ENCODE measurements at regions of chr13 and their contacts with region 1.

Region 1: DNA sequence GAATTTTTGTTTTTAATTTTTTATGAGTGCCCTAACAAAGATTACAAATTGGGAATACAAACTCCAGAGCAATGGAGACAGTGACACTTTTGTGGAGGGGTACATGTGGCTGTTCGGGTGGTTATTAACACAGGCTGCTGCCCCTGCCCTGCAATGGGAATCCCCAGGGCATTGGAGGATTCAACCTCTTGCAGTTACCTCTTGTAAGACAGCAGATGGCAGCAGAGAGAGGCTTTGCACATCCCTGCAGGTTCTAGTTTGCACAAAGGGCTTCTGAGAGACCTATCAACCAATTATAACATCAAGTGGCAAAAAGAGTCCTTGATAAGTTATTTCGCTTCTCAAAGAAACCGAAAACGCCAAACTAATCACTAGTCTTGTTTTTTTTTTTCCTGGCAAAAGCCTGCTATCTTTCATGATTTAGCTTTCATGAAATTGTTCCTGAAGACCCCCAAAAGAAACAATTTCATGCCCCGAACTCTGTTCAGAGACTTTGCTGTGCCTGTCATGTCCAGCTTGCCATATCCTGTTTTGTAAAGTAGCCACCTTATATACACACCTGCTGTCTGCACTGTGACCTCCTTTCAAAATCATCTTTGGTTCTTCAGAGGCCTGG is 10.4 kb downstream of the GJB2 start:
- DNase-seq: no peak
- H3K4me3 ChIP-seq: no peak overlapping the region
- H3K27ac ChIP-seq: no peak overlapping the region
- H3K4me1 ChIP-seq: no peaks in the 10 kb centered on the region
- H3K27me3 ChIP-seq: peaks cover 33% of the 10 kb centered on the region
- CTCF ChIP-seq: peak; percentile 65 to 79 (median 79)
- EP300 ChIP-seq: no peak
- POLR2A ChIP-seq: no peak

Region 2: DNA sequence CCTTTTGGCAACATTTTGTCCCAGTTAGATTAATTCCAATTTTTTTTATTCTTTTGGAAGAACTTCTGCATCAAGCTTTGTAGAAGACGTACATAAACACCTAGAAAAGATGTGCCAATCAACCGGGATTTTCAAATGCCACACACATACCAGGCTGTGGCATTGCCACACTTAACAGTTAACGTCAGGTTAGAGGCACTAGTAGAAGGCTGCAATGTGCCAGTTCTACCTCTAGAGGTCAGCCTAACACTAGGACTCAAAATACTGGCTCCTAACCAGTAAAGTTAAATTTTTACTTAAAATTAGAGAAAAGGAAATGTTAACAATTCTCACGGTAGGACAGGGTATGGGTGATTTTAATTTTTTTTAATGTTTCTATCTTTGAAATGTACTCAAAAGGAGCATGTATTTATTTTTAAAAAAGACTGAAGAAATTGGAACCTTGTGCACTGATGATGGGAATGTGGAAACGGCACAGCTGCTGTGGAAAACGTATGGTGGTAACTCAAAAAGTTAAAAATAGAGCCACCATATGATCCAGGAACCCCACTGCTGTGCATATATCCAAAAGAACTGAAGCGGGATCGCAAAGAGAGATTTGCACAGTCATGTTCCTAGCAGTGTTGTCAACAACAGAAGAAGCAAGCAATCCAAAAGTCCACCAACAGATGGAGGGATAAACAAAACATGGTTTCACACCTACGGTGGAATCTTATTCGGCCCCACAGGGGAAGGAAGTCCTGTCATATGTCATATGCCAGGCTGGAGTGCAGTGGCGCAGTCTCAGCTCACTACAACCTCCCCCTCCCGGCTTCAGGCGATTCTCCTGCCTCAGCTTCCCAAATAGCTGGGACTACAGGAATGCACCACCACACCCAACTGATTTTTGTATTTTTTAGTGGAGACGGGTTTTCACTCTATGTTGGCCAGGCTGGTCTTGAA is 313.0 kb after region 1 on chr13:
- in situ Hi-C with region 1: loop called in 2 of 4 experiments (anchors 25 kb)
- intact Hi-C with region 1: no loop called
- DNase-seq: peak; percentile 73
- H3K4me3 ChIP-seq: no peak overlapping the region
- H3K27ac ChIP-seq: peak overlapping the region in 2 of 4 donors; percentile 25 to 34
- H3K4me1 ChIP-seq: peaks cover 5 to 13% (median 8%) of the 10 kb centered on the region in 4 donors
- H3K27me3 ChIP-seq: no peaks in the 10 kb centered on the region
- CTCF ChIP-seq: peak; percentile 91 to 98 (median 94)
- EP300 ChIP-seq: no peak
- POLR2A ChIP-seq: peak; percentile 12

Region 3: GRCh38 chr13:20814224-20814910 is 632.0 kb after region 1 on chr13:
- in situ Hi-C with region 1: loop called in 1 of 4 experiments (anchors 25 kb)
- intact Hi-C with region 1: no loop called
- DNase-seq: peak; percentile 60
- H3K4me3 ChIP-seq: no peak overlapping the region
- H3K27ac ChIP-seq: peak overlapping the region in 3 of 4 donors; percentile 45 to 63 (median 55)
- H3K4me1 ChIP-seq: peaks cover 0 to 16% (median 9%) of the 10 kb centered on the region in 4 donors
- H3K27me3 ChIP-seq: no peaks in the 10 kb centered on the region
- CTCF ChIP-seq: no peak
- EP300 ChIP-seq: no peak
- POLR2A ChIP-seq: no peak

Region 4: DNA sequence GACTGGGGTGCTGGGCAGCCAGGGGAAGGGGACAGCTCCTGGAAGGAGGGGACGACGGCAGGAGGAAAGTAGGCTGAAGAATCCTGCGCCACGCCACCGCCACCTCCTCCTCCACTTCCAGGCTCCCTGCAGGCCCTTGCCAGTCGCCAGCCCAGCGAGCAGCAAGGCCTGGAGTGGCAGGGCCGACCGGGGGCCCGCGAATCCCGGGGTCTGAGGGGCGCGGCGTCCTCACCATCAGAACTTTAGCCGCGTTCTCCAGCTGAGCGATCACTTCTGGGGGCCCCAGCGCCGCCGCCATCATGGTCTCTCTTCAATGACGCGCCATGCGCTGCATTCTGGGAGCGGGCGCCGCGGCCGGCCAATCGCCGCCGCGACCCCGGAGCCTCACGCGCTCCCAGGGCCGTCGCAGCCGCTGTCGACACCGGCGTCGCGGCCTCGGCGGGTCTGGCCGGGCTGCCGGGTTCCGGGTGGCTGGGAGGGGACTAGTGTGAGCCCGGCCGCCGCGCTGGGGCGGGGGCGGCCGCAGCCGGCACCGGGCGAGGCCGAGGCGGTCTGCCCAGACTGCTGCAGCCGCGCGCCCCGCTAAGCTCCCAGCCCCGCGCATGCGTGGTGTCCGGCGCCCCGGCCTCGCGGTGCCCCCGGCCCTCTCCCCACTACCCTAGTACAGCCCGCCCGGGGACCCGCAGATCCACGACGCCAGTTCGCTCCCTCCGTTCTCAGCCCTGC is 720.3 kb after region 1 on chr13 and contains the start of gene XPO4:
- in situ Hi-C with region 1: loop called in 1 of 4 experiments (anchors 25 kb)
- intact Hi-C with region 1: no loop called
- DNase-seq: peak; percentile 81
- H3K4me3 ChIP-seq: peak within 1 kb of the TSS; percentile 54 to 97 (median 90)
- H3K27ac ChIP-seq: peak within 1 kb of the TSS; percentile 88 to 95 (median 93)
- H3K4me1 ChIP-seq: peaks cover 8 to 19% (median 11%) of the 10 kb centered on the region in 4 donors
- H3K27me3 ChIP-seq: no peaks in the 10 kb centered on the region
- CTCF ChIP-seq: no peak
- EP300 ChIP-seq: no peak
- POLR2A ChIP-seq: peak; percentile 57
- total RNA-seq, gene XPO4: 11.7 to 25.2 (median 13.3) TPM

Region 5: DNA sequence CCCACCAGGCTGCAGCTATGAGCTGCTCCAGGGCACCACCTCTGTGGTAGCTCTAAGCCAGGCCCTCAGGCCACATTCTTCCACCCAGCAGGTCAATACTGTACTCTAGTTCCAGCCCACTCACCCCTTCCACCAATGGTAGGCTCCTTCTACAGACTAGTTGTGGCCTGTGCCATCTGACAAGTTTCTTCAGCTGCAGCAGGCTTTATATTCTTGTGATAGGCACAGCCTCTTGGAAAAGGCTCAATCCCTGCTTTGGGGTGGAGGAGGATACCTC is 1413.1 kb after region 1 on chr13:
- in situ Hi-C with region 1: no loop called
- intact Hi-C with region 1: loop called (anchors 5 kb)
- DNase-seq: no peak
- H3K4me3 ChIP-seq: no peak overlapping the region
- H3K27ac ChIP-seq: no peak overlapping the region
- H3K4me1 ChIP-seq: peaks cover 0 to 4% (median 0%) of the 10 kb centered on the region in 4 donors
- H3K27me3 ChIP-seq: no peaks in the 10 kb centered on the region
- CTCF ChIP-seq: no peak
- EP300 ChIP-seq: no peak
- POLR2A ChIP-seq: no peak

Measured in transverse colon (tissue), 4 donors.